Heart left ventricle (tissue), 16 donors: ENCODE measurements at regions of chr15 and their contacts with region 1.

Region 1: GRCh38 chr15:69160141-69160993 is at the start of gene GLCE:
- DNase-seq: peak; percentile 96 to 97 (median 97)
- ATAC-seq: peak; percentile 98 to 100 (median 99)
- H3K4me3 ChIP-seq: peak within 1 kb of the TSS; percentile 74 to 99 (median 89)
- H3K27ac ChIP-seq: peak within 1 kb of the TSS; percentile 6 to 90 (median 86)
- H3K4me1 ChIP-seq: peaks cover 0 to 20% (median 8%) of the 10 kb centered on the region in 12 donors
- H3K27me3 ChIP-seq: no peaks in the 10 kb centered on the region
- CTCF ChIP-seq: peak in 1 of 12 donors; percentile 7
- POLR2A ChIP-seq: peak in 1 of 2 donors; percentile 96
- total RNA-seq, gene GLCE: 7.8 to 14.3 (median 8.4) TPM

Region 2: GRCh38 chr15:68765602-68766368 is 394.6 kb before region 1 on chr15:
- intact Hi-C with region 1: no loop called
- DNase-seq: no peak
- ATAC-seq: peak in 1 of 4 donors; percentile 41
- H3K4me3 ChIP-seq: no peak overlapping the region
- H3K27ac ChIP-seq: no peak overlapping the region
- H3K4me1 ChIP-seq: peaks cover 0 to 7% (median 0%) of the 10 kb centered on the region in 12 donors
- H3K27me3 ChIP-seq: no peaks in the 10 kb centered on the region
- CTCF ChIP-seq: no peak
- POLR2A ChIP-seq: no peak

Region 3: GRCh38 chr15:69074001-69074842 is 86.1 kb before region 1 on chr15:
- intact Hi-C with region 1: loop called in 2 of 10 experiments (anchors 5 to 10 kb)
- DNase-seq: peak; percentile 61 to 80 (median 72)
- ATAC-seq: peak; percentile 87 to 95 (median 92)
- H3K4me3 ChIP-seq: peak overlapping the region; percentile 51 to 80 (median 65)
- H3K27ac ChIP-seq: peak overlapping the region in 11 of 12 donors; percentile 12 to 85 (median 77)
- H3K4me1 ChIP-seq: peaks cover 0 to 21% (median 6%) of the 10 kb centered on the region in 12 donors
- H3K27me3 ChIP-seq: peaks cover 0 to 12% (median 0%) of the 10 kb centered on the region in 9 donors
- CTCF ChIP-seq: peak in 3 of 12 donors; percentile 6 to 13 (median 11)
- POLR2A ChIP-seq: peak in 1 of 2 donors; percentile 48

Region 4: DNA sequence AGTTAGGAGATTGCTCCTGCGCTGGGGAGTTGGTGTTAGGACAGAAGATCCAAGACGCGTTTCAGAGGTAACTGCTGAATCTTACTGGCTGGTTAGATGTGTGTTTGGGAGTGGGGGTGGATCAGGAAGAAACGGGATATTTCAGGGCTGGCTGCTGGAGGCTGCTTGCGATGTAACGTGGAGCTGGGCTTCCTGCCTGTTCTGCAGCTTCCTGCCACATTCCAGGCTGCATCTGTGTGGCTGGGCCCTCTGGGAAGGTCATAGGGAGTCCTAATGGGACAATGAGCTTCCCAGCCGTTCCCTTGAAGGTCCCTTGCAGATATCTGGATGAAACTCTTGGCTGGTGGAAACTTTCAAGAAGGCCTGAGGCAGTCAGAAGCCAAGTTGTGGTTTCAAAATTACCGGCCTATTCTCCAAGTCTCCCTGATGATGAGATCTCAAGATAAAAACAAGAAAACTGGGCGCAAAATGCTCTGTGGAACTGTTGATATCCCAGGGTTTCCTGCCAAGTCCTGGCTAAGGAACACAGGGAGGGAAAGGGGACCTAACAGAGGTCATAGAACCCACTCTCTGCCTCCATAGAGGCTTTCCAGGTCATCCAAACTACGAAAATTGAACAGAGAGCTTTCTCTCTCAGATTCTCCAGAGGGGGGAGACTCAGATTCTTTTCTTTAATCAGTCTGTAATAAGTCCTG is 78.9 kb before region 1 on chr15:
- intact Hi-C with region 1: loop called in 5 of 10 experiments (anchors 2 to 5 kb)
- DNase-seq: peak; percentile 78 to 87 (median 80)
- ATAC-seq: peak; percentile 66 to 89 (median 86)
- H3K4me3 ChIP-seq: peak overlapping the region in 3 of 12 donors; percentile 2 to 22 (median 3)
- H3K27ac ChIP-seq: peak overlapping the region; percentile 70 to 90 (median 83)
- H3K4me1 ChIP-seq: peaks cover 0 to 45% (median 37%) of the 10 kb centered on the region in 12 donors
- H3K27me3 ChIP-seq: no peaks in the 10 kb centered on the region
- CTCF ChIP-seq: peak in 2 of 12 donors; percentile 11 to 12
- POLR2A ChIP-seq: no peak

Region 5: GRCh38 chr15:69213786-69214185 is 53.4 kb after region 1 on chr15:
- intact Hi-C with region 1: loop called in 1 of 10 experiments (anchors 5 kb)
- DNase-seq: no peak
- ATAC-seq: no peak
- H3K4me3 ChIP-seq: no peak overlapping the region
- H3K27ac ChIP-seq: no peak overlapping the region
- H3K4me1 ChIP-seq: peaks cover 0 to 3% (median 0%) of the 10 kb centered on the region in 12 donors
- H3K27me3 ChIP-seq: no peaks in the 10 kb centered on the region
- CTCF ChIP-seq: no peak
- POLR2A ChIP-seq: no peak

Region 6: DNA sequence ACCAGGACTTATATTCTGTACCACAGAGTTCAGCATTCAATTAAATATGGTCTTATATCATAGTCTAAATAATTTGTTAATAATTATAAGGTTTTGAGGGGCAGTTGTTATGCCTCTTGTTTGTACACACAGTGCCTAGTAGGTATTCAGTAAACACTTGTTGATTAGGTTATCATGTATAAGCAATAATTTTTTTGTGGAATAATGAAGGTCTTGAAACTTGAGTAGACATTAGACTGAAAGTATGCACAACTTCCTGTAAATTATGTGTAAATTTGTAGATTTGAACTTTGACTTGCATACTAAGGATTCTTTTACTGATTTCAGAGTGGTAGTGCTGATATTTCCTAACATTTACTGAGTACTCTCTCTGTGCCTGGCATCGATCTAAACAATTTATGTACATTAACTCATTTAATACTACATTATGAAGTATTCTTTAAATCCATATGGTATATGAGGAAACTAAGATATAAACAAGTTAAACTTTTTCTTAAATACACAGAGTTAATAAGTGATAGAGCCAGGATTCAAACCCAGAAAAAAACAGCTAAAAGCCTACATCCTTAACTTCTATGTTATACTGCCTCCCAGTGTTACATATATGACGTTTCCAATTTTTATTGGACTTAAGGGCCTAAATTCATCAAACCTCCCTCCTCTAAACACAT is 65.1 kb after region 1 on chr15:
- intact Hi-C with region 1: loop called in 4 of 10 experiments (anchors 5 to 10 kb)
- DNase-seq: no peak
- ATAC-seq: no peak
- H3K4me3 ChIP-seq: no peak overlapping the region
- H3K27ac ChIP-seq: no peak overlapping the region
- H3K4me1 ChIP-seq: peaks cover 0 to 7% (median 0%) of the 10 kb centered on the region in 12 donors
- H3K27me3 ChIP-seq: no peaks in the 10 kb centered on the region
- CTCF ChIP-seq: peak in 7 of 12 donors; percentile 22 to 50 (median 41)
- POLR2A ChIP-seq: no peak

Region 7: GRCh38 chr15:69244798-69245197 is 84.4 kb after region 1 on chr15:
- intact Hi-C with region 1: no loop called
- DNase-seq: no peak
- ATAC-seq: no peak
- H3K4me3 ChIP-seq: no peak overlapping the region
- H3K27ac ChIP-seq: no peak overlapping the region
- H3K4me1 ChIP-seq: peaks cover 0 to 16% (median 0%) of the 10 kb centered on the region in 12 donors
- H3K27me3 ChIP-seq: no peaks in the 10 kb centered on the region
- CTCF ChIP-seq: no peak
- POLR2A ChIP-seq: no peak

Region 8: DNA sequence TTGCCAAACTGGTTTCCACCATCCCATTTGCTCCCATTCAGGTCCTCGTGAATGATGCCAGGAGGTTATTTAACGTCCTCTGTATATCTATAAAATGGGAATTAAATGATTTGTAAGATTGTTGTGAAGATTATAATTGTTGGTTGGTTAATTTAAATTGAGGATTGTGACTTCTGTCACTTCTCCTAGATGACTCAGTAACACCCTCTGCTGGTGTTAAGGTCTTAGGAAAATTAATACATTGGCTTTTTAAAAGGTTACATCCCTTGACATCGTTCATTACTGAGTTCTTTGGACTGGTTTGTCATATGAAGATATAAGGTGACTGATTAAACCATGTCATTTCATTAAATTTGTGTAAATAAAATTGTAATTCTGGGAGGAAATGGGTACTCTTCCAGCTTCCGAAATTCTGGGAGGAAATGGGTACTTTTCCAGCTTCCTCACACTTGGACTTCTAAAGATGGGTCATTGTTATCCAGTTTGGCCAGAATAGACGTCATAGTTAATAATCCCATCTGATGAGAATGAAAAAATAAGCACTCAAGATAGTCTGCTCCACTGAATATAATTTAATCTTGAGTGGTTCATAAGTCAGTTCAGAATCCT is 105.1 kb after region 1 on chr15:
- intact Hi-C with region 1: loop called in 5 of 10 experiments (anchors 2 to 10 kb)
- DNase-seq: no peak
- ATAC-seq: no peak
- H3K4me3 ChIP-seq: no peak overlapping the region
- H3K27ac ChIP-seq: no peak overlapping the region
- H3K4me1 ChIP-seq: peaks cover 0 to 3% (median 0%) of the 10 kb centered on the region in 12 donors
- H3K27me3 ChIP-seq: no peaks in the 10 kb centered on the region
- CTCF ChIP-seq: peak; percentile 47 to 75 (median 65)
- POLR2A ChIP-seq: no peak

Region 9: GRCh38 chr15:69394556-69395282 is 234.4 kb after region 1 on chr15:
- intact Hi-C with region 1: loop called in 6 of 10 experiments (anchors 5 to 10 kb)
- DNase-seq: peak; percentile 77 to 92 (median 81)
- ATAC-seq: peak; percentile 66 to 93 (median 90)
- H3K4me3 ChIP-seq: peak overlapping the region in 5 of 12 donors; percentile 10 to 39 (median 26)
- H3K27ac ChIP-seq: no peak overlapping the region
- H3K4me1 ChIP-seq: peaks cover 0 to 14% (median 7%) of the 10 kb centered on the region in 12 donors
- H3K27me3 ChIP-seq: peaks cover 0 to 5% (median 0%) of the 10 kb centered on the region in 9 donors
- CTCF ChIP-seq: peak; percentile 95 to 99 (median 97)
- POLR2A ChIP-seq: no peak